CD8-positive, alpha-beta T cell (primary cell): ENCODE measurements at regions of chr7 and their contacts with region 1.

Region 1: DNA sequence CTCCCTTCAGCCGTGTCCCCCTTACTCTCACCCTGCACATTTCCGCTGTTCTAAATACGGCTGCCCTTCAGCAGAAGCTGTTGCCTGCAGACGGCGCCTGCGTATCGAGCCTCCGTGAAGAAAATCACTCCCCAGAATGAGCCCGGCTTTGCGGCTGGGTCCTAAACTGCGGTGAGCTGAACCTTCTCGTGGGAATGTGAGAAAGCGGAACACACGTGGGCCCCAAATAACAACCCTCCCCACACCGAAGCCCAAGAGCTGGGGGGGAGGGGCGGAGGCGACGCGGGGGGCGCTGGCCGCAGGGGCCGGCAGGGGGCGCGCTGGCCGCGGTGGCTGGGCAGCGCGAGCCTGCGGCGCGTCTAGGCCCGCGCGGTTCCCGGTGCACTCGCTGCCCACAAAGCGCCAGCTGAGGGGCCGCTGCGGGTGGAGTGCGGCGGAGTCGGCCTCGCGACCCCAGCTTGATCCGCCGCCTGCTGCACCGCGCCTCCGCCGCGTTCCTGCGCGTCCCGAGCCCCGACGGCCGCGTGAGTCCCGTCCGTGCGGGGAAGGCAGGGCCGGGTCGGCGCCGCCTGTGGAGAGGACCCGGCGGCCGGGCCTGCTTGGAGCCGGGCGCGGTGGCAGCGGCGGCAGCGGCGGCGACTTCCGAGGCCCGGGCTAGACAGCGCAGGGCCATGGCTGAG is at the start of gene ZNF398:
- DNase-seq: peak; percentile 69 to 92 (median 79)
- ATAC-seq: peak; percentile 78
- H3K4me3 ChIP-seq: peak within 1 kb of the TSS; percentile 66 to 100
- H3K4me3 Mint-ChIP-seq: peak within 1 kb of the TSS; percentile 89
- H3K27ac ChIP-seq: peak within 1 kb of the TSS; percentile 70 to 77
- H3K27ac Mint-ChIP-seq: peak within 1 kb of the TSS; percentile 91
- H3K4me1 ChIP-seq: peaks cover 22% of the 10 kb centered on the region
- H3K4me1 Mint-ChIP-seq: peaks cover 35% of the 10 kb centered on the region
- H3K27me3 ChIP-seq: no peaks in the 10 kb centered on the region
- H3K27me3 Mint-ChIP-seq: no peaks in the 10 kb centered on the region
- CTCF ChIP-seq: peak; percentile 55
- total RNA-seq, gene ZNF398: 12.9 to 15.1 TPM

Region 2: DNA sequence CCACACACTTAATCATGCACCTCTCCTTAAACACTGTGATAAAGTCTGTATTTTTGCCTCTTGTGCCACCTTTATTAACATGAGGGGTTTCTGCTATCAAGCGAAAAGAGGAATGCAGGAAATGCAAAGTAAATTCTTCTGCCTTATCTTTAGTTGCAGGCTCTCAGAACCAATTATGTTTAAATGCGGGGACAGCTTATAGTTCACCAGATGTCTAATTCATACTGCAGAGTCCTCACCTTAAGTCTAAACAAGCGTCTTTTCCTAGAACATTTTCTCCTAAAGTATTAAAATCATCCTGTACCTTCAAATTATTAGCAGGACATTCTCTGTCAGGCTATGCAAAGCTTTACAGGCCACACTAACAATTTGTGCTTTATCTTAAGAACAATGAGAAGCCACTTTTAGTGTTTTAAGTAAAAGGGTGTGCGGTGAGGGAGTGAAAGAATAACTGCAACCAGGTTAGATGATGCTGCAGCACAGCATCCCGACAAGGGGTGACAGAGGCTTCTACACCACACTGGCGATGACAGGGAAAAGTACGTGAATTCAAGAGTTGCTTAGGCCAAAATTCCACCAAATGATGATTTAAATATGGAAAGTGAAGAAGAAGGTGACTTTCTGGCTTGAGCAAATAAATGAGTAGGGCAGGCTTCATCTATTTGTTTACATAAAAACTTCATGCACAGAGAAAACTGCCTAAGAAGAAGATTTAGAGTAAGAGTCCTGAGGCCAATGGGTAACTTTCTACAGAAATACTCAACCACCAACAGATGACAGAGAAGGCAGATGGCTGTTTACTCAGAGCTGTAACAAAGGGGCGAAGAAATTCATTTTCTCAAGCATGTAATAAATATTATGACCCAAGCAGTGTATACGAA is 299.2 kb before region 1 on chr7:
- CTCF ChIA-PET with region 1: no interaction called
- POLR2A ChIA-PET with region 1: no interaction called
- intact Hi-C with region 1: no loop called
- DNase-seq: no peak
- ATAC-seq: no peak
- H3K4me3 ChIP-seq: no peak overlapping the region
- H3K4me3 Mint-ChIP-seq: no peak overlapping the region
- H3K27ac ChIP-seq: no peak overlapping the region
- H3K27ac Mint-ChIP-seq: no peak overlapping the region
- H3K4me1 ChIP-seq: peaks cover 10% of the 10 kb centered on the region
- H3K4me1 Mint-ChIP-seq: peaks cover 29% of the 10 kb centered on the region
- H3K27me3 ChIP-seq: no peaks in the 10 kb centered on the region
- H3K27me3 Mint-ChIP-seq: no peaks in the 10 kb centered on the region
- CTCF ChIP-seq: no peak

Region 3: GRCh38 chr7:148954766-148955165 is 192.4 kb before region 1 on chr7:
- CTCF ChIA-PET with region 1: no interaction called
- POLR2A ChIA-PET with region 1: no interaction called
- intact Hi-C with region 1: no loop called
- DNase-seq: no peak
- ATAC-seq: no peak
- H3K4me3 ChIP-seq: no peak overlapping the region
- H3K4me3 Mint-ChIP-seq: no peak overlapping the region
- H3K27ac ChIP-seq: no peak overlapping the region
- H3K27ac Mint-ChIP-seq: no peak overlapping the region
- H3K4me1 ChIP-seq: no peaks in the 10 kb centered on the region
- H3K4me1 Mint-ChIP-seq: no peaks in the 10 kb centered on the region
- H3K27me3 ChIP-seq: no peaks in the 10 kb centered on the region
- H3K27me3 Mint-ChIP-seq: no peaks in the 10 kb centered on the region
- CTCF ChIP-seq: no peak

Region 4: GRCh38 chr7:149028346-149029109 is 118.7 kb before region 1 on chr7 and contains the start of gene PDIA4:
- CTCF ChIA-PET with region 1: interaction called, 3 read pairs
- POLR2A ChIA-PET with region 1: interaction called, 4 read pairs
- intact Hi-C with region 1: loop called (anchors 1 to 5 kb)
- DNase-seq: peak; percentile 98 to 100 (median 99)
- ATAC-seq: peak; percentile 88
- H3K4me3 ChIP-seq: peak within 1 kb of the TSS; percentile 58 to 78
- H3K4me3 Mint-ChIP-seq: peak within 1 kb of the TSS; percentile 87
- H3K27ac ChIP-seq: peak within 1 kb of the TSS; percentile 62 to 78
- H3K27ac Mint-ChIP-seq: peak within 1 kb of the TSS; percentile 94
- H3K4me1 ChIP-seq: peaks cover 27% of the 10 kb centered on the region
- H3K4me1 Mint-ChIP-seq: peaks cover 49% of the 10 kb centered on the region
- H3K27me3 ChIP-seq: no peaks in the 10 kb centered on the region
- H3K27me3 Mint-ChIP-seq: no peaks in the 10 kb centered on the region
- CTCF ChIP-seq: no peak
- total RNA-seq, gene PDIA4: 12.0 to 14.5 TPM

Region 5: DNA sequence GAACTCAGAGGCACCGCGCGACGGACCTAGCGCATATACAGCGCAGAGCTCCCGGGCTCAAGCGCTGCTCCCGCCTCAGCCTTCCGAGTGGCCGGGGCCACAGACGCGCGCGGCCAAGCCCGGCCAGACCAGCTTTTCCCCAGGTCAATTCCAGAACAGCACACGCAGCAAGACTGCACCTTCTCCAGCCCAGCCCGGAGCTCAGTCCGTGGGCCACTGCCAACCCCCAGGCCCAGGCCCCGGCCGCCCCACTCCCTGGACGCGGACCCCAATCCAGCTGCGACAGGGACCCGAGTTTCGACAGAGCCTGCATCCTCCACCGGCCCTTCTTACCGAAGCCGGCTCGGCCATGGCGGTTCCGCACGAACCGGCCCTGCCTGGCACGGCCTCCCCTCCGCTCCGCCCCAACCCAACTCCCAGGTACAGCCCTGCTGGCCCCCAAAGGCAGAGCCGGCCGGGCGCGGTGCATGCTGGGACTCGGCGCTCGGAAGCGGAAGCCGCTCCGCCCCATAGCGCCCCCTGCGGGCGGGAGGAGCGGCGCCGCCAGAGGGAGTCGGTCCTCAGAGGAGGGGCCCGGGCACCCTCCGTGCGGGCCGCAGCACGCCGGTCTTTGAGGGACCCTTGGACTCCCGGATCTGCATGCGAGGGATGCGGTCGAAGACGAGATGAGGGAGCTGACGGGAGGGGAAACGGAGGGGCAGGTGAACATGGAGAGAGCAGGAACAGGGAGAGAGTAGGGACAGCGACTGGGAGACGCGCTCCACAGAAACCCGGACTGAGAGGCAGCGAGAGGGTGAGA is 21.1 kb before region 1 on chr7 and contains the start of gene ZNF425:
- CTCF ChIA-PET with region 1: interaction called, 24 read pairs
- POLR2A ChIA-PET with region 1: interaction called, 61 read pairs
- intact Hi-C with region 1: loop called (anchors 1 kb)
- DNase-seq: peak; percentile 89 to 98 (median 95)
- ATAC-seq: peak; percentile 86
- H3K4me3 ChIP-seq: peak within 1 kb of the TSS; percentile 99
- H3K4me3 Mint-ChIP-seq: peak within 1 kb of the TSS; percentile 100
- H3K27ac ChIP-seq: peak within 1 kb of the TSS; percentile 86 to 88
- H3K27ac Mint-ChIP-seq: peak within 1 kb of the TSS; percentile 98
- H3K4me1 ChIP-seq: peaks cover 18% of the 10 kb centered on the region
- H3K4me1 Mint-ChIP-seq: peaks cover 28% of the 10 kb centered on the region
- H3K27me3 ChIP-seq: no peaks in the 10 kb centered on the region
- H3K27me3 Mint-ChIP-seq: no peaks in the 10 kb centered on the region
- CTCF ChIP-seq: peak; percentile 83
- total RNA-seq, gene ZNF425: 0.52 to 0.56 TPM

Region 6: GRCh38 chr7:149239345-149240191 is 92.4 kb after region 1 on chr7 and contains the start of gene ZNF212:
- CTCF ChIA-PET with region 1: no interaction called
- POLR2A ChIA-PET with region 1: no interaction called
- intact Hi-C with region 1: loop called (anchors 1 to 2 kb)
- DNase-seq: peak; percentile 76 to 92 (median 89)
- ATAC-seq: peak; percentile 100
- H3K4me3 ChIP-seq: peak within 1 kb of the TSS; percentile 81 to 95
- H3K4me3 Mint-ChIP-seq: peak within 1 kb of the TSS; percentile 92
- H3K27ac ChIP-seq: peak within 1 kb of the TSS; percentile 41 to 67
- H3K27ac Mint-ChIP-seq: peak within 1 kb of the TSS; percentile 91
- H3K4me1 ChIP-seq: peaks cover 23% of the 10 kb centered on the region
- H3K4me1 Mint-ChIP-seq: peaks cover 34% of the 10 kb centered on the region
- H3K27me3 ChIP-seq: peaks cover 0 to 4% of the 10 kb centered on the region in 2 experiments
- H3K27me3 Mint-ChIP-seq: peaks cover 7% of the 10 kb centered on the region
- CTCF ChIP-seq: peak; percentile 85
- total RNA-seq, gene ZNF212: 20.9 to 22.1 TPM

Region 7: DNA sequence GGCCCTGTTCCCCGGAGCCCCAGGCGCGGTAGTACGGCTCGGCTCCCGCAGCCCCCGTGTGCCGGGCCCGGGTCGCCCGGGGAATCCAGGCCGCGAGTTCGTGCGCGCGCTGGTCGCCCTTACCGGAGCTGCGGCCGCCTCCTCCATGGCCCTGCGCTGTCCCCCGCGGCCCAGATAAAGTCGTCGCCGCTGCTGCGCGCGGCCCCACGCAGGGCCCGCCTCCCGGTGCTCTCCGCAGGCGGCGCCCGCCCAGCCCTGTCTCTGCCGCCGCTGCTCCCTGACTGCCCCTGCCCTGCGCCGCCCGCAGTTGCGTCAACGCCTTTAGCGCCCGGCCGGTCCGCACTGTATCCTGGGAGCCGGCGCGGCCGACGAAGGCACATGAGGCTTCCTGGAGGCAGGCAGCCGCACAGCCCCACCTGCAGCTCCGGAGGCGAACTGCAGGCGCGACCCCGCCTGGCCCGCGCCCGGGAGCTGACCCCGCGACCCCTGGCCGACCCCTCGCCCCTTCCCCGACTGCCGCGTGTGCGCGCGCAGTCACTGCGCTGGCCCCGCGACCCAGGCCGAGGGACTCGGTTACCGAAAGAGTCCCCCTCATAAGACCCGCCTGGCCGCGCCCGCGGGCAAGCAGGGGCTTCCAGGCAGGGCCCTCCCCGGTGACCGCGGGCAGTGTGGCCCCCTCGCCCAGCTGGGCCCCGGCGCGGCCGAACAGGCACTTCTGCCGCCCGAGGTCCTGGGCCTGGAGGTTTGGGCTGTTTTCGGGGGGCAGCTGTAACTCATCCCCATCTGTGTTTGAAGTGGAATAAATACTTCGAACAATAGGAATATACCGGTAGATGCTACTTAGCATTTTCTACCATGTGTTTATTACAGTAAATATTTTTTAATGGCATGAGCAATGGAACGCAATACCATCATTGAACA is 477.5 kb after region 1 on chr7:
- CTCF ChIA-PET with region 1: interaction called, 4 read pairs
- POLR2A ChIA-PET with region 1: no interaction called
- intact Hi-C with region 1: loop called in 1 of 2 experiments (anchors 10 kb)
- DNase-seq: peak; percentile 84 to 96 (median 90)
- ATAC-seq: peak; percentile 84
- H3K4me3 ChIP-seq: peak overlapping the region; percentile 68 to 86
- H3K4me3 Mint-ChIP-seq: peak overlapping the region; percentile 93
- H3K27ac ChIP-seq: peak overlapping the region; percentile 46 to 68
- H3K27ac Mint-ChIP-seq: peak overlapping the region; percentile 93
- H3K4me1 ChIP-seq: peaks cover 27% of the 10 kb centered on the region
- H3K4me1 Mint-ChIP-seq: peaks cover 41% of the 10 kb centered on the region
- H3K27me3 ChIP-seq: no peaks in the 10 kb centered on the region
- H3K27me3 Mint-ChIP-seq: peaks cover 3% of the 10 kb centered on the region
- CTCF ChIP-seq: peak; percentile 99